ENCODE measurements at regions of chr15 and their contacts with region 1.

Region 1: GRCh38 chr15:60362321-60363086 is 35.3 kb downstream of the ANXA2 start:
- DNase-seq: peak; percentile 64 to 86
- ATAC-seq: peak; percentile 15 to 35; a peak in 5 of 6 replicates
- H3K4me3 ChIP-seq: peak overlapping the region; percentile 2; the same call in 1 of the 3 replicates
- H3K27ac ChIP-seq: peak overlapping the region; percentile 75 to 86
- H3K4me1 ChIP-seq: peaks cover 81% of the 10 kb centered on the region
- CTCF ChIP-seq: no peak
- EP300 ChIP-seq: peak in 1 of 2 experiments; percentile 16; a peak in 2 of 5 replicates
- POLR2A ChIP-seq: no peak
- RAD21 ChIP-seq: no peak

Region 2: DNA sequence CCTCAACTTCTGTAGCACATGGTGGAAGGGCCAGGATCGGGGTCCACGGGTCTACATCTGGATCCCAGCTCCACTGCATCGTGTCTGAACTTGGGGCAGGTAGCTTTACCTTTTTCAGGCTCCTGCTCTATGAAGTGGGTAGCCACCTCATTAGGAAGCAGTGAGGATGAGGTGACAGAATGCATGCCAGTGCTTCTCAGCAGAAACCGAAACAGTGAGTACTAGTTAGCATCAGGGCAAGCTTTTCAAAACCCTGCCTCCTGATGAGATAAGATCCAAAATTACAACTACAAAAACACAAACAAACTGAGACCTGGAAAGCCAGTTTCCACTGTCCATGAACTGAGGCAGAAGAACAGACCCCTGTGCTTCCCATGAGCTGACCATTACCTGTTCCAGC is 42.1 kb before region 1 on chr15:
- CTCF ChIA-PET with region 1: no interaction called
- POLR2A ChIA-PET with region 1: no interaction called
- DNase-seq: no peak
- ATAC-seq: 0 out of 6 replicates have a peak, but pooled peaks of 1 of the 2 experiments have one; percentile 20
- H3K4me3 ChIP-seq: no peak overlapping the region
- H3K27ac ChIP-seq: no peak overlapping the region
- H3K4me1 ChIP-seq: no peaks in the 10 kb centered on the region
- CTCF ChIP-seq: no peak
- EP300 ChIP-seq: no peak
- POLR2A ChIP-seq: no peak
- RAD21 ChIP-seq: no peak

Region 3: DNA sequence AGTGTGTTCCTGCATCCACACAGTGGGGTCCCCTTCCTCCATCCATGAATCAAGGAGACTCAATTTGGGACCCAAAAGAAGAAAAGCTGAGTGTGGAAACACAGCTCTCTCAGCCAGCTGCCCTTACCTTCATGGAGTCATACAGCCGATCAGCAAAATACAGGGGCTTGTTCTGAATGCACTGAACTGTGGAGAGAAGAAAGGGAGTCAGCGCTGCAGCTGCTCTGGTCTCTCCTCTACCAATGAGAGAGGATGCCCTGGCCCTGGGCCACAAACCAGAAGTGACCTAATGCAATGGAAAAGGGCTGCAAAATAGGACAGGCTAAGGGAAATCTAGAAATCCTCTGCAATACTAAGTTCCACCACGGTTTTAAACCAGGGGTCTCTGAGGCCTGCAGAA is 11.4 kb before region 1 on chr15:
- CTCF ChIA-PET with region 1: interaction called, 51 read pairs
- POLR2A ChIA-PET with region 1: interaction called, 5 read pairs
- DNase-seq: peak in 1 of 2 experiments; percentile 28
- ATAC-seq: peak; percentile 40 to 46
- H3K4me3 ChIP-seq: no peak overlapping the region
- H3K27ac ChIP-seq: peak overlapping the region in 1 of 2 experiments; percentile 58; a peak in 2 of 6 replicates
- H3K4me1 ChIP-seq: peaks cover 99% of the 10 kb centered on the region
- CTCF ChIP-seq: no peak
- EP300 ChIP-seq: no peak
- POLR2A ChIP-seq: no peak
- RAD21 ChIP-seq: no peak

Region 4: DNA sequence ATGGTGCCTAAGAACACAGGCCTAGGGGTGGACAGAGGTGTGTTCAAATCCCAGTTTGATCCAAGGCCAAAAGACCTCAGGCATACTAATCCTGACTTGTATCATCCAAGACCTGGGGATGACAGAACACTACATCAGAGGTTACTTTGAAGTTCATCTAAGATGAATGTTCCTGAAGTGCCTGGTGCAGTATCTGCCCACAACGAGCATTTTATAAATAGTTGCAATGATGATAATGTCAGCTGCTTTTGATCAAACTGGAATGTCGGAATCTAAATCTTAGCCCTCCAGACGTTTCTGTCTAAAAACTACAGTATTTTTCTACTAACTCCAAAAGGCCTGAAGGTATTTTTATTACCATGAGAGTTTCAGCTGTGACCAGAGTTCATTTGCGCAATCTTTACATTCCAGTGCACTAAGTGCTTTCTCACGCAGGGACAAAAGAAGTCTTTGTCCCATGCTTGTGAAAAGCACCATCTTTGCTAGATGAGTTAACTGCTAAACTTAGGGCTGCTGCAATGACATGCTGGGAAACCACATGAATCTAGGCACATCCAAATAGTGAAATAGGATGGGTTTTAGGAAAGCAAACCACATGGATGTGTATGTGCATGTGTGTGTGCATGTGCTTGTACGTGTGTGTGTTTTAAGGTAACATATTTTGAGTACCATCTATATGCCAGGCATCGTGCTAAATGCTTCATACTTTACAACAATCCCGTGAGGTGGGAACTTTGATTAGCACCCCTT is 17.2 kb after region 1 on chr15:
- CTCF ChIA-PET with region 1: interaction called, 174 read pairs
- POLR2A ChIA-PET with region 1: interaction called, 75 read pairs
- DNase-seq: peak in 1 of 2 experiments; percentile 95
- ATAC-seq: peak; percentile 40 to 41
- H3K4me3 ChIP-seq: peak overlapping the region; percentile 20
- H3K27ac ChIP-seq: peak overlapping the region; percentile 90
- H3K4me1 ChIP-seq: peaks cover 99% of the 10 kb centered on the region
- CTCF ChIP-seq: no peak
- EP300 ChIP-seq: peak; percentile 95 to 98
- POLR2A ChIP-seq: no peak
- RAD21 ChIP-seq: no peak; a peak in 4 of 5 replicates

Region 5: GRCh38 chr15:60397772-60398445 is 35.4 kb after region 1 on chr15 and contains the start of gene ANXA2:
- CTCF ChIA-PET with region 1: interaction called, 58 read pairs
- POLR2A ChIA-PET with region 1: interaction called, 12 read pairs
- DNase-seq: peak; percentile 84 to 95
- ATAC-seq: peak; percentile 62 to 72
- H3K4me3 ChIP-seq: peak within 1 kb of the TSS; percentile 88
- H3K27ac ChIP-seq: peak within 1 kb of the TSS; percentile 97 to 99
- H3K4me1 ChIP-seq: peaks cover 59% of the 10 kb centered on the region
- CTCF ChIP-seq: no peak
- EP300 ChIP-seq: peak in 1 of 2 experiments; percentile 37; a peak in 1 of 5 replicates
- POLR2A ChIP-seq: peak; percentile 92
- RAD21 ChIP-seq: no peak
- polyA plus RNA-seq, gene ANXA2: 5,725 and 5,746 TPM in 2 replicates

Region 6: GRCh38 chr15:60444289-60444912 is 81.9 kb after region 1 on chr15:
- CTCF ChIA-PET with region 1: interaction called, 116 read pairs
- POLR2A ChIA-PET with region 1: no interaction called
- DNase-seq: peak; percentile 30 to 50
- ATAC-seq: peak in 1 of 2 experiments; percentile 58; a peak in 4 of 6 replicates
- H3K4me3 ChIP-seq: no peak overlapping the region
- H3K27ac ChIP-seq: peak overlapping the region; percentile 32 to 59; a peak in 4 of 6 replicates
- H3K4me1 ChIP-seq: peaks cover 58% of the 10 kb centered on the region
- CTCF ChIP-seq: peak; percentile 92
- EP300 ChIP-seq: no peak
- POLR2A ChIP-seq: no peak
- RAD21 ChIP-seq: peak; percentile 85 to 91